Activated T-helper 1 cell treated with anti-CD3 and anti-CD28 coated beads, Interleukin-12 subunit alpha, Interleukin-12 subunit beta, Interleukin-2, Interleukin-4 antibody, amounts not matched to agents 30 ng/mL and 10 ng/mL and 1 ng/mL, durations not matched to agents 14 hours and 24 hours and 36 hours (primary cell): ENCODE measurements at regions of chr1 and their contacts with region 1.

Region 1: DNA sequence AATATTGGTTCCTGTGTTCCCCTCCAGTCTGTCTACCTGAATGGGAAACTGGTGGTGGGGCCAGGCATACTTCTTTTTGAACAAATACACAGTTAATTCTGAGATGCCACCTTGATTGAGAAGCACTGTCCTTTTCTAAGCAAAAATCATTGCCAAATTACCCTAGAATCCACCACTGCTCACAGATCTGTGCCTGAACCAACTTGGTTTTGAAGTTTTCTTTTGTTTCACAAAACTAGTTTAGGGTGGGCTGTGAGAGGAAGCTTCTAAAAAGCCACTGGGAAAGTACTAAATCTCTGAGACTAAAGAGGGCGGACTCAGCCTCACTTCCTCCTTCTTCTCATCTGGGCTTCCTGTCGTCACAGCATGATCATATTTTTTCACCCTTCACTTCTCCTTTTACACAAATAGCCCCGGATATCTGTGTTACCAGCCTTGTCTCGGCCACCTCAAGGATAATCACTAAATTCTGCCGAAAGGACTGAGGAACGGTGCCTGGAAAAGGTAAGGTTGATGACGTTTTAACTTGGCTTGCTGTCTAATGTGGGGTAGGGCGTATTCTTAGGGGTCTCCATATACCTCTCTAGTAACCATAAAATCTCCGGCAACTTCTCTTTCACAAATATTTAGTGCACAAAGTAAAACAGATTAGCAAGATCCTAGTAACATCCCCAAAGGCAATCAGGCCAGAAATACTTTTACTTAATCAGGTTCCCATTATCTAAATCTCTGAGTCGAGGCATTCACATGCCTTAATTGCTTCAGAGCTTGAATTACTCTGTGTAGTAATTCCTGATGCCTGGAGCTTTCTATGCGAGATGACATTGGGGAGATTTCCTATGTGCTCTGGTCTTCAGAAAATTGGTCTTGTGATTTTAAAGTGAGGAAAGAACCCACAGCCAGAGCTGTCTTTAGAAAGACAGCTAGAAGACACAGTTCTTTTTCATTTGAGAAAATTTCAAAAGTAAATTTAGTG is at the start of gene CD53:
- DNase-seq: peak; percentile 47
- H3K4me3 Mint-ChIP-seq: peak within 1 kb of the TSS; percentile 99
- H3K27ac Mint-ChIP-seq: peak within 1 kb of the TSS; percentile 98
- H3K4me1 Mint-ChIP-seq: peaks cover 49% of the 10 kb centered on the region
- H3K27me3 Mint-ChIP-seq: no peaks in the 10 kb centered on the region
- total RNA-seq, gene CD53: 201 and 204 TPM in 2 replicates

Region 2: DNA sequence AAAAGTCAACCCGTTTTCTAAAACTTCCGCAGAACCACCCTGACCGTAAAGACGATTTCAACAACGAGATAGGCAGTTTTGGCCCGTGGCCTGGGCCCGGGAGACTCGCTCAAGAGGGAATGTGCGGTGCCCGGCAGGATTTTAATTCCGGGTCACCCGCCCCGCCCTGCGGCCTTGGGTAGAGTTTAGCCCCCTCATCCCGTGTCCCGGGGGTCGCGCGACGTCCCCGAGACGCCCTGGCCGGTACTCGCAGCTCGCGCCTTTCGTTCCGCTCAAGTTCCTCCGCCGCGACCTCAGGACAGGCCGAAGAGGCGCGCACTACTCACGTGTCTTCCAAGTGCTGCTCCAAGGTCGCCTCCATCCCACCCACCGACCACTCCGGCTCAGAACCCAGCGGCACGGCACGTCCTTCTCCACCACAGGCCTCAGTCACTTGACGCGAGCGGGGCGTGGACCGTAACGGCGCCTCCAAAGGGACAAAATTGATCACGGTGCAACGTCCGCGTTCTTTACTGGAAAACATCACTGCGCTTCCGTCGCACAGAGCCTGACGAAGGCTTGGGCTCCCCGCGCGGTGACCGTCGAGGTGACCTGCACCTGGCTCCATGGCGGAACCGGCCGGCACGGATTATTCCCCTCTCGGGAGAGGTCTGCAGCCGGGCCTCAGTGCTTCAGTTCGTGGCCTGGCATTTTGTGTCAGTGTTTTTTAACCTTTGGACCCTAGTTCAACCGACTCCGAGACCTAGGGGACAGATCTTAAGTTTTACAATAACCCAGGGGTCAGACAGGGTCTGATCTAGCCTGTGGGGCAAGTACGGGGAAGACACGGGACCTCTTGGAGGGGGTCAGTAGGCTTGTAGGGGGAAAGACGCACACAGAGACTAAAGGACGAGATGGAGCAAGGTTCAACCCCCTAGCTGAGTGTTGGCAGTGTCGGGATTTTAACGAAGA is 465.5 kb before region 1 on chr1 and contains the start of gene LAMTOR5:
- intact Hi-C with region 1: loop called (anchors 10 kb)
- DNase-seq: peak; percentile 90
- H3K4me3 Mint-ChIP-seq: peak within 1 kb of the TSS; percentile 100
- H3K27ac Mint-ChIP-seq: peak within 1 kb of the TSS; percentile 100
- H3K4me1 Mint-ChIP-seq: peaks cover 22% of the 10 kb centered on the region
- H3K27me3 Mint-ChIP-seq: no peaks in the 10 kb centered on the region
- total RNA-seq, gene LAMTOR5: 163 and 184 TPM in 2 replicates

Region 3: DNA sequence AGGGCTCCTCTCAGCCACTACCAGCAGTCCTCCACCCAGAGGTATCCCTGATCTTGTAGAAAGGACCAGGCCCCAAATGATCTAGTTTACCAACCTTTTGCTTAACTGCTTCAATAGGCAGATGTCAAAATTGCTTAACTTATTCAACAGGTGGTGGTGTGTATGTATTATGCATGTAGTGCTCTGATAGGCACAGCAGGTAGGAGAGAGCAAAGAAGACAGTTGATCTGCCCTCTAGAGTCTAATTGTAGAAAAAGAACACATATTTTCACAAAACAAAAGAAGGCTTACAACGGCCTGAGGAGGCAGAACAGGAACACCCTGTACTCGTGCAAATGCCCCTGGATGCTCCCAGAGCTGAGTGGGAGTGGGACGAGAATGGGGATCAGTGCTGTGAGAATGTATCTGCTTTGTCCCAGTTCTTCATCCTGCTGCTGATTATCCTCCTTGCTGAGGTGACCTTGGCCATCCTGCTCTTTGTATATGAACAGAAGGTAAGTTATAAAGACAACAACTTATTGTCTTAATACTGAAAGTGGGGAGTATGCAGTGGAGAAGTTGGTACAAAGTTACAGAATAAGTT is 21.0 kb after region 1 on chr1:
- intact Hi-C with region 1: loop called (anchors 1 kb)
- DNase-seq: no peak
- H3K4me3 Mint-ChIP-seq: no peak overlapping the region
- H3K27ac Mint-ChIP-seq: peak overlapping the region; percentile 78
- H3K4me1 Mint-ChIP-seq: peaks cover 94% of the 10 kb centered on the region
- H3K27me3 Mint-ChIP-seq: no peaks in the 10 kb centered on the region

Region 4: GRCh38 chr1:111139956-111140679 is 267.1 kb after region 1 on chr1 and contains the starts of genes CEPT1 and DRAM2:
- intact Hi-C with region 1: loop called (anchors 10 kb)
- DNase-seq: peak; percentile 89
- H3K4me3 Mint-ChIP-seq: peak within 1 kb of the TSS; percentile 100
- H3K27ac Mint-ChIP-seq: peak within 1 kb of the TSS; percentile 100
- H3K4me1 Mint-ChIP-seq: peaks cover 40% of the 10 kb centered on the region
- H3K27me3 Mint-ChIP-seq: no peaks in the 10 kb centered on the region
- total RNA-seq, gene CEPT1: 32.5 and 37.3 TPM in 2 replicates
- total RNA-seq, gene DRAM2: 24.0 and 26.6 TPM in 2 replicates

Region 5: DNA sequence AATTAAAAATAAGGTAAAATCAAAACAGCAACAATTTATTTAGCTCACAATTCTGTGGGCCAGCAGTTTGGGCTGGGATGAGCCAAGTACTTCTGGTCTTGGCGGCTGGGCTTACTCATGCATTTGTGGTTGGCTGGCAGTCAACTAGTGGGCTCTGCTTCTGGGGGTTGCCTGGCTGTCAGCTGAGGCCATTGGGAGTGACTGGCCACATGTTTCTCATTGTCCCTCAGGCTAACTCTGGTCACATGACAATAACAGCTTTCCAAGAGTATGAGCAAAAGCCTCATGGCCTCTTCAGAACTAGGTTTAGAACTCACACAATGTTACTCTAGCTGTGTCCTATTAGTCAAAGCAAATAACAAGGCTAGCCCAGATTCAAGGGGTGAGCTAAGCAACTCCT is 402.0 kb after region 1 on chr1:
- intact Hi-C with region 1: loop called (anchors 2 kb)
- DNase-seq: peak; percentile 8
- H3K4me3 Mint-ChIP-seq: no peak overlapping the region
- H3K27ac Mint-ChIP-seq: peak overlapping the region; percentile 37
- H3K4me1 Mint-ChIP-seq: peaks cover 26% of the 10 kb centered on the region
- H3K27me3 Mint-ChIP-seq: peaks cover 20% of the 10 kb centered on the region